Activated CD8-positive, alpha-beta T cell treated with anti-CD3 and anti-CD28 coated beads, Interleukin-2, amount 10 ng/mL, durations not matched to agents 7 days and 5 days (primary cell): ENCODE measurements at regions of chr3 and their contacts with region 1.

Region 1: DNA sequence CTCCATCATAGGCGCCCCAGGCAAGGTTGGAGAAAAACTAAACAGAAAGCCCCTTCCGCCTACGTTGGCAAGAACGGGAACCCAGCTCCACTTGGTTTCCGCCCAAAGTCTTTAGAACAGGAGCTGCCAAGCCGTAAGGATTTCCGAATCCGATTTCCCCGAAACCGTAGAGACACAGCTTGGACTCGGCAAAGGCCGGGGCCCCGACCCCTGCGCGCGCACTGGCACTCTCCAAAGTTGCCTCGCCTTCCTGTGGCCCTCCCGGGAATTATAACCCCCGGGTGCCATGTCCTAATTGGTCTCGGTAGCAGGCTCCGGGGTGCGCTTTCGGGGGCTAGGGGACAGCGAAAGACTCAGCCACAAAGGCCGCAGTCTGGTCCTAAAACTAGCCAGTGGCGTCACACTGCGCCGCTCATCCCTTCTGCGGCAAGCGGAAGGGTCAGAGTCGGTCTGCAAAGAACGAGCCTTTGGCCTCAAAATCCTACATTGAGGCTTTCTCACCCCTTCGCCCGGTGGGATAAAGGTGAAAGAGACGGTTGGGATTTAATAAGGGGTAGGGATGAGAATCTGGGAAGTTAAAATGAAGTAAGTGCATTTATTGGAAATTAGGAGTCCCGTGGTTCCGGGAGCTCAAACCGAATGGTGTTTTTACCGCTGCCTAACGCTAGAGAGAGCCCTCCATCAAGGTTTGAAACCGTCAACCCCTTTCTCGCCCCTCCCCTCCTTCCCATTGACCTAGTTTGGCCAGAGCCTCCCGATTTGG is 6.8 kb downstream of the BCL6 start:
- DNase-seq: peak; percentile 84
- ATAC-seq: peak; percentile 24
- H3K4me3 Mint-ChIP-seq: peak overlapping the region; percentile 100
- H3K27ac Mint-ChIP-seq: peak overlapping the region; percentile 100
- H3K4me1 Mint-ChIP-seq: peaks cover 53% of the 10 kb centered on the region
- H3K27me3 Mint-ChIP-seq: no peaks in the 10 kb centered on the region

Region 2: GRCh38 chr3:187802928-187803259 is 64.4 kb after region 1 on chr3:
- CTCF ChIA-PET with region 1: interaction called, 38 read pairs
- POLR2A ChIA-PET with region 1: interaction called, 195 read pairs
- DNase-seq: peak; percentile 84
- ATAC-seq: peak; percentile 55
- H3K4me3 Mint-ChIP-seq: peak overlapping the region; percentile 39
- H3K27ac Mint-ChIP-seq: peak overlapping the region; percentile 93
- H3K4me1 Mint-ChIP-seq: peaks cover 83% of the 10 kb centered on the region
- H3K27me3 Mint-ChIP-seq: no peaks in the 10 kb centered on the region

Region 3: DNA sequence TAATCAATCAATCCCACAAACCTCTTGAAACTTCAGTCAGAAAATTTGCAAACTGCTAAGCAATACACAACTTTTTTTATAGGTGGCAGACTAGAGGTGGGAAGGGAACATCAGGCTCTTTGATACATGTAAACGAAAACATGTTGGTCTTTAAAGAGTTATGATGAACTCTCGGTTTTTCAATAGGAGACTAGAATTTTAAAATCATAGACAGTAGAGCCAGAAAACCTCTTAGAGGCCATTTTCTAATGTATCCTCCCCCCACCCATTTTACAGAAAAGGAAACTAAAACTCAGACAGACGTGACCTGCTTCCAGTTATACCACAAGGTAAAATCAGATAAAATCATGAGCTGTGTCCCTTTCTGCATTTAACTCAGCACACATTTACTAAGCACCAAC is 236.4 kb after region 1 on chr3:
- CTCF ChIA-PET with region 1: interaction called, 36 read pairs
- POLR2A ChIA-PET with region 1: interaction called, 59 read pairs
- DNase-seq: no peak
- ATAC-seq: peak; percentile 67
- H3K4me3 Mint-ChIP-seq: peak overlapping the region; percentile 54
- H3K27ac Mint-ChIP-seq: peak overlapping the region; percentile 93
- H3K4me1 Mint-ChIP-seq: peaks cover 81% of the 10 kb centered on the region
- H3K27me3 Mint-ChIP-seq: no peaks in the 10 kb centered on the region

Region 4: DNA sequence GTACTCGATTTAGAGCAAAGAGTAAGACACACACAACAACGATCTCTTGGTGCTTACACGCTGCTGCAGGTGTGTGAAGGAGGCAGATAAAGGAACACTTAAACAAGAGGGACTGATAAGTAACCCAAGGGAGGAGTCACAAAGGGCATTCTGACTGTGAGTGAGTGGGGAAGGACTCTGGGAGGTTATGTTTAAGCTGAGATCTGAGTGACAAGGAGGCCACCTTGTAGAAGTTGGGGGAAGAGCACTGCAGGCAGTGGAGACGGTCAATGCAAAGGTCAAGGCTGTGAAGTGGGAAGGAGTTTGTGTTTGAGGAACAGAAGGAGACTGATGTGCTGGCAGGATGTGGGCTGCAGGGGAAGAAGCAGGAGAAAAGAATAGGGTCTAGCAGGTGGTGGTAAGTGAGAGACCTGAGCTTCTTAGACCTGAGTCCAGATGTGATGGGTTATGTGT is 478.5 kb after region 1 on chr3:
- CTCF ChIA-PET with region 1: interaction called, 10 read pairs
- POLR2A ChIA-PET with region 1: interaction called, 4 read pairs
- DNase-seq: peak; percentile 23
- ATAC-seq: peak; percentile 65
- H3K4me3 Mint-ChIP-seq: no peak overlapping the region
- H3K27ac Mint-ChIP-seq: peak overlapping the region; percentile 62
- H3K4me1 Mint-ChIP-seq: peaks cover 29% of the 10 kb centered on the region
- H3K27me3 Mint-ChIP-seq: no peaks in the 10 kb centered on the region

Region 5: DNA sequence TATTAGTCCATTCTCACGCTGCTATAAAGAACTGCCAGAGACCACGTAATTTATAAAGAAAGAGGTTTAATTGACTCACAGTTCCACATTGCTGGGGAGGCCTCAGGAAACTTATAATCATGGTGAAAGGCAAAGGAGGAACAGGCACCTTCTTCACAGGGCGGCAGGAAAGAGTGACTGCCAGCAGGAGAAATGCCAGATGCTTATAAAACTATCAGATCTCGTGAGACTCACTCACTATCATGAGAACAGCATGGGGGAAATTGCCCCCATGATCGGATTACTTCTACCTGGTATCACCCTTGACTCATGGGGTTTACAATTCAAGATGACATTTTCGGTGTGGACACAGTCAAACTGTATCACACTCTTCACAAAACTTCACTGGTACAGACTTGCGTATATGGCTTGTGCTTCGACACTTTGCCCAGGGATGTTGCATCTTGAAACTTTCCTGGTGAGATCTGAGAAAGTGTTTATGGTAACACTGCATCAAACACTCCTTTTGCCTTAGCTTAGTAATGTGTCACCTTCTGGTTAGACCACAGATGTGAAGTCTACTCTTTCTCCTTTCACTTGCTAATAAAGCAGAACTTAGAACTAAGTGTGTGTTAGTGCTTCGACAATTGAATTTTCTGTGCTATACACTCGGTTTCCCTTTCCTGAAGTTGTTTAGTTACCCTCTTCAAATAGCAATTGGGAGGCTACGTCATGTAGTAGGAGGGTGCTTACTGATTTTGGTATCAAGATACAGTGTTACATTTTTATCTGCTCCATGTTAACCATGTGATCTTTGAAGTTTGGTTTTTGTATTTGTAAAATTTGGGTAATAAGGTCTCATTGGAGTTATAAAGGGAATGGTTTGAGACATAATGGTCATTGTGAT is 601.1 kb after region 1 on chr3:
- CTCF ChIA-PET with region 1: interaction called, 20 read pairs
- POLR2A ChIA-PET with region 1: interaction called, 3 read pairs
- DNase-seq: peak; percentile 49
- ATAC-seq: peak; percentile 91
- H3K4me3 Mint-ChIP-seq: peak overlapping the region; percentile 56
- H3K27ac Mint-ChIP-seq: peak overlapping the region; percentile 82
- H3K4me1 Mint-ChIP-seq: peaks cover 32% of the 10 kb centered on the region
- H3K27me3 Mint-ChIP-seq: no peaks in the 10 kb centered on the region

Region 6: DNA sequence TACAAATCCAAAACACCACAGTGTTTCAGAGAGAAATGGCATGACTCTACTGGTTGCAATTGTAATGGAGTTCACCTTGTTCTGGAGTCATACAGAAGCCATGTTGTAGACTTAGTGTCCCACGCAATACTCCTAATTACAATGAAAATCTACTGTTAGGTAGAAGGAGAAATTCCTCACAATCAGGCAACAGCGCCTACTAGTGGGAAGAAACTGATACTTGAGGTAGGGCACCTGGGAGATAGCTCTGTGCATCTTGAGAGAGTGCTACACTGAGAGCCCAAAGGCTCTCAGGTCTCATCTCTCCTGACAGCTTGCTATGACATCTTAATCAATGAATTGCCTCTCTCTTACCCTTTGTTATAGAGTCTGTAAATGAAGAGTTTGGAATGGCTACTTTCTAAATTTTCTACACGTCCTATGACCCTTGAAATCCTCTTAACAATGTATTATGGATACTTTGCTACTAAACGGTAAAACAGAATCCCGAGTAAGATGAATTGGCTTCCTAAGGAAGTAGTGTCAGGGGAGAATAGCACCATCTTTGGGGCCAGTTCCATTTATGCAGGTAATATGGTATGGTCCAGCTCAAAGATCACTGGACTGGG is 1010.6 kb after region 1 on chr3:
- CTCF ChIA-PET with region 1: interaction called, 52 read pairs
- POLR2A ChIA-PET with region 1: no interaction called
- DNase-seq: peak; percentile 66
- ATAC-seq: peak; percentile 65
- H3K4me3 Mint-ChIP-seq: no peak overlapping the region
- H3K27ac Mint-ChIP-seq: no peak overlapping the region
- H3K4me1 Mint-ChIP-seq: peaks cover 3% of the 10 kb centered on the region
- H3K27me3 Mint-ChIP-seq: no peaks in the 10 kb centered on the region

Region 7: DNA sequence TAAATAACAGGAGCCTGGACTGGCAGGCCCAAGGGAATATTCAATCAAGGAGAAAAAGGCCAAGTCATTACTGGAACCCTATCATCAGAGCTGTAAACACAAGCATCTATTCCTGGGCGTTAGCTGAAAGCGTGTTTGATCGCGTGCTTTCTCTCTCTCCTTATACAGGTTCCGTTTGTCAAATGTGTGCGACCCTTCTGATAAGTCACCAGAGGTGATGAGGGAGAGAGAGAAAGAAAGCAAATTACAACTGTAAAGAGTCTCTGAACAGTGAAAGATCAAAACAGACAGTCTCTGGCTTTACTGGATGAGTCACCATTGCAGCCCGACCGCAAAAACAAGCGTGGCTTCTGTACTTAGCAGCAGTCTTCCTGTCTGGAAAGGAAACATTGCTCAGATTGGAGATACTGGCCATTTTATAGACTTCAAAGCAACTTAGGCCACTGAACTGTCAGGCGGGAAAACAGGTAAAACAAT is 1393.8 kb after region 1 on chr3:
- CTCF ChIA-PET with region 1: interaction called, 234 read pairs
- POLR2A ChIA-PET with region 1: interaction called, 8 read pairs
- DNase-seq: peak; percentile 89
- ATAC-seq: peak; percentile 98
- H3K4me3 Mint-ChIP-seq: peak overlapping the region; percentile 60
- H3K27ac Mint-ChIP-seq: peak overlapping the region; percentile 93
- H3K4me1 Mint-ChIP-seq: peaks cover 28% of the 10 kb centered on the region
- H3K27me3 Mint-ChIP-seq: no peaks in the 10 kb centered on the region